ENCODE measurements at regions of chr14 and their contacts with region 1.

Region 1: GRCh38 chr14:67704484-67705089 is 2.9 kb downstream of the RDH12 start:
- DNase-seq: no peak
- ATAC-seq: peak; percentile 94
- H3K4me3 Mint-ChIP-seq: no peak overlapping the region
- H3K27ac Mint-ChIP-seq: no peak overlapping the region
- H3K4me1 Mint-ChIP-seq: 0 out of 2 replicates have a peak, but pooled peaks cover 3% of the 10 kb centered on the region
- H3K27me3 Mint-ChIP-seq: no peaks in the 10 kb centered on the region
- CTCF ChIP-seq: no peak

Region 2: GRCh38 chr14:67532998-67533753 is 171.4 kb before region 1 on chr14 and contains the start of gene PLEKHH1:
- CTCF ChIA-PET with region 1: interaction called, 38 read pairs
- POLR2A ChIA-PET with region 1: no interaction called
- DNase-seq: peak; percentile 75
- ATAC-seq: peak; percentile 88
- H3K4me3 Mint-ChIP-seq: peak within 1 kb of the TSS; percentile 86
- H3K27ac Mint-ChIP-seq: peak within 1 kb of the TSS; percentile 89
- H3K4me1 Mint-ChIP-seq: peaks cover 34% of the 10 kb centered on the region
- H3K27me3 Mint-ChIP-seq: peaks cover 2% of the 10 kb centered on the region; the same call in 1 of the 2 replicates
- CTCF ChIP-seq: no peak
- total RNA-seq, gene PLEKHH1: 45.4 to 49.8 TPM (median 48.3 TPM) in 3 replicates

Region 3: GRCh38 chr14:67583711-67584644 is 120.6 kb before region 1 on chr14:
- CTCF ChIA-PET with region 1: interaction called, 75 read pairs
- POLR2A ChIA-PET with region 1: no interaction called
- DNase-seq: peak; percentile 29
- ATAC-seq: peak; percentile 92
- H3K4me3 Mint-ChIP-seq: no peak overlapping the region
- H3K27ac Mint-ChIP-seq: no peak overlapping the region
- H3K4me1 Mint-ChIP-seq: no peaks in the 10 kb centered on the region
- H3K27me3 Mint-ChIP-seq: no peaks in the 10 kb centered on the region
- CTCF ChIP-seq: peak; percentile 36; the same call in 1 of the 2 replicates

Region 4: DNA sequence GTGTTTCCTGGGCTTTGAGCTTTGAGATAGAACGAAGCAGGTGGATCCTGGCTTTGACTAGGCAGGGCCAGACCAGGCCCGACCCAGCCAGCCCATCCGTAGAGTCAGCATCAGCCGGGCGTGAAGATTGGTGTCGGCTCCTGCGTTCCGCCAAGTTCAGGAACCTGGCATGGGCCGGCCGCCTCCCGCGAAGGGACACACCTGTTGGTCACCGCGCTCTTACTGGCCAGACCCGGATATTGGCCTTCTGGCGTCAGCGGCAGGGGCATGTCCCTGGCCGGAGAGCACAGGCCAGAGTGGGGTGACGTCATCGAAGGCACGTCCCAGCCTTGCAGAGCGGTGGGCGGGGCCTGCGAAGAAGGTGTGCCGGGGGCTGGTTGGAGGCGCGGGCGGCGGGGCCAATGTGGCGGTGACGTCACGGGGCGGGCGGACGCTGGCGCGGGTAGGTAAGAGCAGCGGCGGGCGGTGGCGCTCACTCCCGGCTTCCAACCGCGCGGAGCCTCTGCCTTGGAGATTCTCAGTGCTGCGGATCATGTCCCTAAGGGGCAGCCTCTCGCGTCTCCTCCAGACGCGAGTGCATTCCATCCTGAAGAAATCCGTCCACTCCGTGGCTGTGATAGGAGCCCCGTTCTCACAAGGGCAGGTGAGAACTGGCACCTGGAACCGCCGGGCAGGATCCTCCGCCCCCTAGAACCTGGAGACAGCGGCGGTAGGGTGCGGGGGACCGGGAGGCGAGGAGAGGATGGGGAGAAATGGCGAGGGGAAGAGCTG is 85.0 kb before region 1 on chr14 and contains the start of gene ARG2:
- CTCF ChIA-PET with region 1: interaction called, 29 read pairs
- POLR2A ChIA-PET with region 1: interaction called, 4 read pairs
- DNase-seq: peak; percentile 100
- ATAC-seq: peak; percentile 91
- H3K4me3 Mint-ChIP-seq: peak within 1 kb of the TSS; percentile 92
- H3K27ac Mint-ChIP-seq: peak within 1 kb of the TSS; percentile 92
- H3K4me1 Mint-ChIP-seq: peaks cover 35% of the 10 kb centered on the region
- H3K27me3 Mint-ChIP-seq: peaks cover 46% of the 10 kb centered on the region
- CTCF ChIP-seq: no peak
- total RNA-seq, gene ARG2: 29.8 to 38.5 TPM (median 33.0 TPM) in 3 replicates

Region 5: GRCh38 chr14:67674481-67675169 is 30.0 kb before region 1 on chr14 and contains the start of gene VTI1B:
- CTCF ChIA-PET with region 1: interaction called, 17 read pairs
- POLR2A ChIA-PET with region 1: no interaction called
- DNase-seq: peak; percentile 81
- ATAC-seq: peak; percentile 89
- H3K4me3 Mint-ChIP-seq: peak within 1 kb of the TSS; percentile 80
- H3K27ac Mint-ChIP-seq: peak within 1 kb of the TSS; percentile 96
- H3K4me1 Mint-ChIP-seq: peaks cover 20% of the 10 kb centered on the region
- H3K27me3 Mint-ChIP-seq: no peaks in the 10 kb centered on the region
- CTCF ChIP-seq: no peak
- total RNA-seq, gene VTI1B: 108 to 133 TPM (median 123 TPM) in 3 replicates

Region 6: DNA sequence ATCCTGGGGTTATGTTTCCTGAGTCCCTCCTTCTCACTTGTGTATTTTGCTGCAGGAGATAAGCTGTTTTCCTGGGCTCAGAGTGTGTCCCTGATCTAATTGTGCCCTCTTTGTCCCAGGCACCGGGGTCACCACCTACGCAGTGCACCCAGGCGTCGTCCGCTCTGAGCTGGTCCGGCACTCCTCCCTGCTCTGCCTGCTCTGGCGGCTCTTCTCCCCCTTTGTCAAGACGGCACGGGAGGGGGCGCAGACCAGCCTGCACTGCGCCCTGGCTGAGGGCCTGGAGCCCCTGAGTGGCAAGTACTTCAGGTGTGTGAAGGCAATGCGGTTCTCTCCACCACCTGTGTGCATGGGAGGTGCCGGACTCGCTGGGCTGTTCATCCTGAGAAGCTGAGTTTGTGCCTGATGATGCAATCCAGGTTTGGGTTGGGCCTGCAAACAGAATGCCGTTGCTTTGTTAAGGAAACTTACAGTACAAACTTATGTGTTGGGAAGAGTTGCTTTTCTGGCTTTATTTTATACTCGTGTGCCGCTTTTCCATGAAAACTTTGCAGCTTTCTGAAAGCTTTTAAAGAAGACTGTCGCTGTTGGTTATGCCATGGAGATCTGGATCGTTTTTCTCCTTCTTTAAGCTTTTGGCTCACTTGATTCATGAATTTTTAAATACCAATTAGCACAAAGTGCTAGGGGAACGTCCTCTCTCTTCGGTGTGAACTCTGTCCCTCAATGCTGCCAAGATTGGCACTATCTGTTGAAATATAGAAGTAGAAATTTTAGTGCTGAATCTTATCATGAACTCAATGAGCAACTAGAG is 24.7 kb after region 1 on chr14:
- CTCF ChIA-PET with region 1: interaction called, 18 read pairs
- POLR2A ChIA-PET with region 1: interaction called, 3 read pairs
- DNase-seq: peak; percentile 79
- ATAC-seq: peak; percentile 99
- H3K4me3 Mint-ChIP-seq: peak overlapping the region; percentile 43
- H3K27ac Mint-ChIP-seq: peak overlapping the region; percentile 57
- H3K4me1 Mint-ChIP-seq: peaks cover 21% of the 10 kb centered on the region
- H3K27me3 Mint-ChIP-seq: no peaks in the 10 kb centered on the region; the same call in 1 of the 2 replicates
- CTCF ChIP-seq: no peak

Region 7: DNA sequence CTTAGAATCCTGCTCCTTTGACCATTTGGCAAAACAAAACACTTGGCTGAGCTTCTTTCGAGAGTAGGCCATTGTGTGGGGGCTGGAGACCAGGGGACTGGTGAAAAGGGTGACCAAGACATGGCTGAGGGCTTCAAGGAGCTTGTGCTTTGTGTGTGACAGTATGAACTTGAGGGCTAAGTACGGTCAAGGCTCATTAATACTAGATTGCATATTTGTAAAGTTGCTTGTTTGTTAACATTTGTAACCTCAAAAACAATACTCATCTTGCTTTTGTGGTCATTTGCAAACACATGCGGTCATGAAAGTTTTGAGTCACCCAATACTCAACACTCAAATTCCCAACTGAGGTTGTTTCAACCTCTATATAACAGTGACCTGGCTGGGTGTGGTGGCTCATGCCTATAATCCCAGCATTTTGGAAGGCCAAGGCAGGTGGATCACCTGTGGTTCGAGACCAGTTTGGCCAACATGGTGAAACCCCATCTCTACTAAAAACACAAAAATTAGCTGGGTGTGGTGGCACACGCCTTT is 69.3 kb after region 1 on chr14:
- CTCF ChIA-PET with region 1: no interaction called
- POLR2A ChIA-PET with region 1: no interaction called
- DNase-seq: no peak
- ATAC-seq: no peak
- H3K4me3 Mint-ChIP-seq: no peak overlapping the region
- H3K27ac Mint-ChIP-seq: no peak overlapping the region
- H3K4me1 Mint-ChIP-seq: no peaks in the 10 kb centered on the region
- H3K27me3 Mint-ChIP-seq: no peaks in the 10 kb centered on the region
- CTCF ChIP-seq: no peak

Measured in WTC11 (cell line).